K562 (cell line): ENCODE measurements at regions of chr5 and their contacts with region 1.

Region 1: DNA sequence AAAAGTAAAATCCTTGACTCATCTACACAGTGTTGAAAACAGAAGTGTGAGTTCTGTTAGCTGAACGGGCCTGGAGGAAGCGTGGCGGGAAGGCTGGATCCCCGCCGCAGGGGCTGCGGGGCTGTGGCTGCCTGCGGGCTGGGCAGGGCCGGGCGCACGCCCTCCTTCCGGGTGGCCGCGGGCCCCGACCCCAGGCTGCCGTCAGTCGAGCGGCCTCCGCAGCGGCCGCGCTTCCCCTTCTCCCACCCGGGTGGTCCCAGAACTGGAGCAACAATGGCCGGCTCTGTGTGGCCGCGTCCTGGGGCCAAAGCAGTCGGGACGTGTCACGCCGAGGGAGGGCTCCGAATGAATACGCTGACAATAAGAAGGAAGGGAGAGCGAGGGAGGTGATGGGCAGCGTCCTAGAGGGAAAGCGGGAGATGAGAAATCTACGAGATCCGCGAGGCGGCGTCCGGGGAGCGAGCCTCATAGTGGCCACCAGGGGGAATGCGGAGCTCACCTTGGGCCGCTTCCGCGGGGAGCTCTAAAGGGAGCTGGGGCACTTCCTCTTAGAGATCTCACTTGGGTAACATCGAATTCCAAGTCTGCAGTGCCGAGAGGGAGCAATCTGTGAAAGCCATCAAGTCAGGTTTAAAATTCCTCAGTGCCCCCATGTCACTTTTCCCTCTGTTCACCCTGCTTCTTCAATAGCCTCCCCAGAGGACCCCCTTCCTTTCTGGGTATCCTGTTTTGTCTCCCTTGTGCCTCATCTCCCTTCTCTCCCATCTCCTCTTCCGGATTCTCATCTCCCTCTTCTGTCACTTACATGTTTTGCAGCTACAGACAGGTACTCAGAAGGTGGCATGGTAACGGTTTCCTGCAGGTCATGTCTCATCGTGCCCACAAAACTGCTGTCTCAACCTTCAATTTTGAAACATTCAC is 83.9 kb downstream of the SLC1A3 start:
- DNase-seq: peak; percentile 74 to 82 (median 76)
- ATAC-seq: peak; percentile 95
- H3K4me3 ChIP-seq: no peak overlapping the region; the same call in 1 of the 2 replicates
- H3K27ac ChIP-seq: no peak overlapping the region
- H3K4me1 ChIP-seq: peaks cover 0 to 13% of the 10 kb centered on the region in 2 experiments; a peak in 2 of 5 replicates
- H3K27me3 ChIP-seq: peaks cover 4 to 29% of the 10 kb centered on the region in 2 experiments; a peak in 3 of 5 replicates
- CTCF ChIP-seq: peak; percentile 95 to 99 (median 97)
- EP300 ChIP-seq: no peak
- POLR2A ChIP-seq: no peak
- RAD21 ChIP-seq: peak; percentile 55 to 71

Region 2: DNA sequence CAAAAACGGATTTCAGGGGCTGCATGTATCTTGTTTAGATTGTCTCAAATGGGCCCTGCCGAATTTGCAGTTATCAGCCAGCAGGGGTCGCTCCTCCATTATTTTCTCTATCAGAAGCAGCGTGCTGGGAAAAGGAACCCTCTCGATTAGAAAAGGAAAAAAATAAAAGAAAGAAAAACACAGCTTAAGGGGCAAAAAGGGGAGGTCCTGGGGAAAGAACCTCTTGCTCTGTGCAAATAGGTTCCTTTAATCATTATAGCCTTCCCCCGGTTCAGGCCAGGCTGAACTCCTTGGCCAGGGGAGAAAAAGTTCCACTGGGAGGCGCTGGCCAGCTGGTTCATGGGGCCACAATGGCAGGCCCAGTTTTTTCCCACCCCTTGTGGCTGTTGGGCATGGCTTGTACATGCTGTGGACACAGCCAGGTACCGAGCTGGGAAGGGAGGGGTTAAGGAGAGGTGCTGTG is 726.9 kb before region 1 on chr5:
- CTCF ChIA-PET with region 1: interaction called, 3 read pairs
- POLR2A ChIA-PET with region 1: no interaction called
- in situ Hi-C with region 1: no loop called
- intact Hi-C with region 1: loop called (anchors 5 kb)
- DNase-seq: peak; percentile 48 to 58 (median 57)
- ATAC-seq: peak; percentile 97
- H3K4me3 ChIP-seq: no peak overlapping the region; the same call in 1 of the 2 replicates
- H3K27ac ChIP-seq: no peak overlapping the region
- H3K4me1 ChIP-seq: no peaks in the 10 kb centered on the region
- H3K27me3 ChIP-seq: no peaks in the 10 kb centered on the region; a peak in 1 of 5 replicates
- CTCF ChIP-seq: peak; percentile 69 to 90 (median 87)
- EP300 ChIP-seq: no peak
- POLR2A ChIP-seq: no peak
- RAD21 ChIP-seq: peak; percentile 34 to 63; a peak in 3 of 4 replicates

Region 3: GRCh38 chr5:36177715-36178523 is 512.4 kb before region 1 on chr5:
- CTCF ChIA-PET with region 1: interaction called, 8 read pairs
- POLR2A ChIA-PET with region 1: no interaction called
- in situ Hi-C with region 1: no loop called
- intact Hi-C with region 1: loop called (anchors 5 kb)
- DNase-seq: peak in 2 of 4 experiments; percentile 17 to 37
- ATAC-seq: peak; percentile 81
- H3K4me3 ChIP-seq: no peak overlapping the region
- H3K27ac ChIP-seq: no peak overlapping the region
- H3K4me1 ChIP-seq: no peaks in the 10 kb centered on the region
- H3K27me3 ChIP-seq: no peaks in the 10 kb centered on the region
- CTCF ChIP-seq: peak; percentile 36 to 65 (median 52); a peak in 5 of 6 replicates
- EP300 ChIP-seq: no peak
- POLR2A ChIP-seq: no peak
- RAD21 ChIP-seq: peak; percentile 43 to 70

Region 4: DNA sequence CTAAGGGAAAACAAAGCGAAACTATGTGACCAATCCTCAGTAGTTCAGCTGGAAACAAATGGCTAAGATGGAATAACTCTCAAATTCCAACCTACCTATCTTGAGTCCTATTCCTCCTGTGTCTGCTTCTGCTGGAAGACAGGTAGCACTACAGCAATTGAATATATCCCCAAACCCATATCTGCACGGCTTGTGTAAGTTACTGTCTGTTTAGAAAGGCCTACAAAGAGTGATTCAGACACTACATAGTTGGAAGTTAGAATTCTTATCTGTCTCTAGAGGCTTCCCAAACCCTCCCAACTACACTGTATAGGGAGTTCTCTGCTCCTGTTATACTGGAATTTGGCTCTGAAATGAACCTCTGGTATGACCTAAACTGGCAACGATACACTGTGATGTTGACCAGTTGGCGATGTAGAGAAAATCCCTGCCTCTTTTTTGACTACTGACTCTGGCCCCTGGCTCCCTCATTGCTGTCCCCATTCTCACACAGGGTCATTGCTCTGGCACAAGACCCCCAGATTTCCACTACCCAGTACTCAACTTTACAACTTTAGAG is 426.0 kb before region 1 on chr5:
- CTCF ChIA-PET with region 1: no interaction called
- POLR2A ChIA-PET with region 1: no interaction called
- in situ Hi-C with region 1: loop called (anchors 10 kb)
- intact Hi-C with region 1: no loop called
- DNase-seq: peak in 1 of 4 experiments; percentile 7
- ATAC-seq: peak; percentile 56
- H3K4me3 ChIP-seq: no peak overlapping the region
- H3K27ac ChIP-seq: 0 out of 3 replicates have a peak overlapping the region, but pooled peaks have one; percentile 17
- H3K4me1 ChIP-seq: peaks cover 0 to 6% of the 10 kb centered on the region in 2 experiments; a peak in 1 of 5 replicates
- H3K27me3 ChIP-seq: peaks cover 3 to 4% of the 10 kb centered on the region in 2 experiments; a peak in 4 of 5 replicates
- CTCF ChIP-seq: no peak
- EP300 ChIP-seq: no peak
- POLR2A ChIP-seq: no peak
- RAD21 ChIP-seq: no peak

Region 5: DNA sequence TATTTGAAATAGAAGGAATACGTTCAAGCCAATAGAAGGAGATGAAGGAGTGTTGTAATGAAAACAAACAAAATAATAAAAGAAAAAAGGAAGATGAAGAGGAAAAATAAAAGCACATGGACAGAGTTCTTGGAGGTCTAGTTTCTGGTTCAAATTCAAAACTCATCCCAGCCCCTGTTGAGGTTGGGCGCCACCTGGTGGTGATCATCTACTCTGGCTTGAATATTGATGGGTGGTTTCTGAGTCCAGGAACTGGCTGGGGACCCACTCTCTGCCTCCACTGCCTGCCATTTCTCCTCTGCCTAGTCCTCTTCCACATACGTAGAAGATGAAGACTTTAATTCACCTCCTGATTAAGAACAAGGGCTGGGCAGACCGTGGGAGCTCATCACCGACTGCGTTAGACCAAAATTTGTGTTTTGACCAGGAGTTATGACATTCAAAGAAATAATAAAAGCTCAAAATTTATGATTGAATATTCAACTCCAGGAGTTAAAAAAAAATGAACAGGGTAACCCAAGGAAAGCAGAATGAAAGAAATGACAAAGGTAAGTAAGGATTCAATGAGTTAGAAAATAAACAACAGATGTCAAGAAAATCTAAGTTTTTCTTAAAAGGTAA is 182.9 kb before region 1 on chr5:
- CTCF ChIA-PET with region 1: no interaction called
- POLR2A ChIA-PET with region 1: no interaction called
- in situ Hi-C with region 1: no loop called
- intact Hi-C with region 1: loop called (anchors 5 kb)
- DNase-seq: peak; percentile 84 to 87 (median 86)
- ATAC-seq: peak; percentile 95
- H3K4me3 ChIP-seq: no peak overlapping the region
- H3K27ac ChIP-seq: no peak overlapping the region
- H3K4me1 ChIP-seq: no peaks in the 10 kb centered on the region
- H3K27me3 ChIP-seq: peaks cover 0 to 4% of the 10 kb centered on the region in 2 experiments; a peak in 1 of 5 replicates
- CTCF ChIP-seq: peak; percentile 83 to 88 (median 86)
- EP300 ChIP-seq: no peak
- POLR2A ChIP-seq: no peak
- RAD21 ChIP-seq: peak; percentile 81 to 92

Region 6: GRCh38 chr5:36569491-36569890 is 120.8 kb before region 1 on chr5:
- CTCF ChIA-PET with region 1: no interaction called
- POLR2A ChIA-PET with region 1: no interaction called
- in situ Hi-C with region 1: no loop called
- intact Hi-C with region 1: no loop called
- DNase-seq: no peak
- ATAC-seq: no peak
- H3K4me3 ChIP-seq: no peak overlapping the region
- H3K27ac ChIP-seq: no peak overlapping the region
- H3K4me1 ChIP-seq: no peaks in the 10 kb centered on the region
- H3K27me3 ChIP-seq: peaks cover 0 to 6% of the 10 kb centered on the region in 2 experiments; a peak in 1 of 5 replicates
- CTCF ChIP-seq: no peak
- EP300 ChIP-seq: no peak
- POLR2A ChIP-seq: no peak
- RAD21 ChIP-seq: no peak

Region 7: GRCh38 chr5:36944607-36945225 is 254.4 kb after region 1 on chr5:
- CTCF ChIA-PET with region 1: no interaction called
- POLR2A ChIA-PET with region 1: no interaction called
- in situ Hi-C with region 1: no loop called
- intact Hi-C with region 1: no loop called
- DNase-seq: peak; percentile 12 to 67 (median 20)
- ATAC-seq: peak; percentile 46; the same call in 1 of the 3 replicates
- H3K4me3 ChIP-seq: no peak overlapping the region
- H3K27ac ChIP-seq: no peak overlapping the region
- H3K4me1 ChIP-seq: no peaks in the 10 kb centered on the region
- H3K27me3 ChIP-seq: no peaks in the 10 kb centered on the region
- CTCF ChIP-seq: peak in 2 of 3 experiments; percentile 41 to 63; a peak in 4 of 6 replicates
- EP300 ChIP-seq: no peak
- POLR2A ChIP-seq: no peak
- RAD21 ChIP-seq: peak; percentile 35 to 46

Region 8: DNA sequence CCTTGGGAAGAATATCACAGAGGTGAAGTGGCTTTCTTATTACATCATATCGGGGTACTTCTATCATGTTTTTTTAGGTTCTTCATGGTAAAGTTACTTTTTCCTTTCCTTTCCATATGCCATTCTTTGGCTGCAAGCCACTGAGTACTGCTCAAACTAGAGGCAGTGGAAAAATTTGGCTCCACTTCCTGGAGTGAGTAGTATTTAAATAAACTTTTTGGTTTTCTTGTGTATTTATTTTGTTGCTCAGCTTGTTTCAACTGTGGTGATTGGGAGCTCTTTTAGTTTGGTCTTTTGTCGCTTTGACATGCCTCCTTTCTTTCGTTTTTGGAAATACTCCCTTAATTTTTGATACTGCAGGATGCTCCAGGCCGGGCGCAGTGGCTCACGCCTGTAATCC is 758.6 kb after region 1 on chr5:
- CTCF ChIA-PET with region 1: no interaction called
- POLR2A ChIA-PET with region 1: no interaction called
- in situ Hi-C with region 1: no loop called
- intact Hi-C with region 1: no loop called
- DNase-seq: no peak
- ATAC-seq: no peak
- H3K4me3 ChIP-seq: no peak overlapping the region
- H3K27ac ChIP-seq: no peak overlapping the region
- H3K4me1 ChIP-seq: no peaks in the 10 kb centered on the region
- H3K27me3 ChIP-seq: no peaks in the 10 kb centered on the region
- CTCF ChIP-seq: no peak
- EP300 ChIP-seq: no peak
- POLR2A ChIP-seq: no peak
- RAD21 ChIP-seq: no peak